CD4-positive, alpha-beta memory T cell (primary cell): ENCODE measurements at regions of chr1 and their contacts with region 1.

Region 1: DNA sequence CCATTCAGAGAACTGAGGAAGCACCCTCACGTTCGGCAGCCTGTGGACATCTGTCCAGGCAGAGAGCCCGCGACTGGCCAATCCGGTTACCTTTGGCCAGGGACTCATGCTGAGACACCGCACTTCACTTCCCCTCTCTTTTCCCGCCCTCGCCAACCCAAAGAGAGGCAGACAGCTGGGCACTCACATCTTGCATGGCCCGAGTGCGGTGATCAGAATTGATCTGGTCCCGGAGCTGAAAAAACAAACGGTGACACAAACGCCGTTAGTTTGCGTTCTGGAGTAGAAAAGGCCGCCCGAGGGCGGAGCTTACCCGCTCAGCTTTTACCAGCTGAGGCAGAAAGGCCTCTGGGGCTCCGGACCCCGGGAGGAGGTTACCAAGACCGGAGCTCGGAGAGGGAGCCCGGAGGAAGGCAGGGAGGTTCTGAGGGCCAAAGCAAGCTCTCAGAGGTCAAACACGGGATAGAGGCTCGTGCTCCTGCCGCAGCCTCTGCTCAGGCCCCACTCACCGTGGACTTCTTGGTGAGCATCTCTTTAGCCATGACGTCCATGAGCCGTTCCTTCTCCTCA is 376 bp downstream of the SF3A3 start:
- DNase-seq: peak in 2 of 5 donors; percentile 32 to 57
- H3K4me3 ChIP-seq: peak overlapping the region; percentile 91 to 93
- H3K4me3 Mint-ChIP-seq: peak overlapping the region; percentile 97 to 100 (median 99)
- H3K27ac ChIP-seq: peak overlapping the region; percentile 78
- H3K27ac Mint-ChIP-seq: peak overlapping the region; percentile 86 to 99 (median 95)
- H3K4me1 ChIP-seq: peaks cover 25% of the 10 kb centered on the region
- H3K4me1 Mint-ChIP-seq: peaks cover 10 to 36% (median 21%) of the 10 kb centered on the region in 4 donors
- H3K27me3 ChIP-seq: no peaks in the 10 kb centered on the region
- H3K27me3 Mint-ChIP-seq: peaks cover 0 to 2% of the 10 kb centered on the region in 2 donors

Region 2: GRCh38 chr1:37890378-37891014 is 99.0 kb before region 1 on chr1:
- CTCF ChIA-PET with region 1: no interaction called
- POLR2A ChIA-PET with region 1: no interaction called
- intact Hi-C with region 1: loop called (anchors 1 kb)
- DNase-seq: peak in 4 of 5 donors; percentile 30 to 39 (median 36)
- H3K4me3 ChIP-seq: no peak overlapping the region
- H3K4me3 Mint-ChIP-seq: no peak overlapping the region
- H3K27ac ChIP-seq: no peak overlapping the region
- H3K27ac Mint-ChIP-seq: peak overlapping the region in 6 of 7 donors; percentile 4 to 66 (median 42)
- H3K4me1 ChIP-seq: no peaks in the 10 kb centered on the region
- H3K4me1 Mint-ChIP-seq: peaks cover 2 to 5% (median 4%) of the 10 kb centered on the region in 4 donors
- H3K27me3 ChIP-seq: no peaks in the 10 kb centered on the region
- H3K27me3 Mint-ChIP-seq: no peaks in the 10 kb centered on the region

Region 3: DNA sequence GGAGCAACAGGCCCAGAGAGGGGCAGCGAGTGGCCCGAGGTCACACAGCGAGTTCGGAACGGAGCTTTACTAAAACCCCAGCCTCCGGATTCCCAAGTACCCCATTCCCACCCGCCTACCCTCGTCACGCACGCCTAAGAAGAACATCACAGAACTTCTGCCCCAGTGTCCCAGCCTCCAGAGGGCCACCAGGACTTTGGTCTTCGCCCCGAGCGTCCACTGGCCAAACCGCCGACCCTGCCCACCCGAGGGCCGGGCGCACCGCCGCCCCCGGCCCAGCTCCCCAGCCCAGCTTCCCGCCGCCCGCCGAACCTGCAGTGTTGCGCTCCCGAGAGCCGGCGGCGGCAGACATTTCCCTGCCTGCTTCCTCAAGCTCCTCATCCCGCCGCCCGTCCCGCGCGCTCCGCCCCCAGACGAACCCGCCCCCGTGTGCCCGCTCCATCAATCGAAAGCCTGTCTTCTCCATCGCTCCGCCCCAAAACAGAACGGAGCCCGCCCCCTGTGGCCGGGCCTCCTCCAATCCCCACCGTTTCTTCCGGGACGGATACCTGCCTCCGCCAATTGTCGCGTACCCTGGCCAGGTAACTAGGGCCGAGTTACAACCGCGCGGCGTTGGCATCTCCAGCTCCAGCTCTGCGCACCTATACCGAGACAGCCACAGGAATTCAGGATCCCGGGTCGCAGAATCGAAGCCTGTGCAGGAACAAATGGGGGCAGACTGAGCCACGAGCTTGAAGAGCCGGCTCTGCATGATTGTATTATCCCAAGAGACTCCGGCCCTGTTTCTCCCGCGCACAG is 57.9 kb before region 1 on chr1:
- CTCF ChIA-PET with region 1: interaction called, 3 read pairs
- POLR2A ChIA-PET with region 1: interaction called, 5 read pairs
- intact Hi-C with region 1: loop called (anchors 1 kb)
- DNase-seq: peak; percentile 95 to 97 (median 97)
- H3K4me3 ChIP-seq: peak overlapping the region; percentile 58 to 71
- H3K4me3 Mint-ChIP-seq: peak overlapping the region; percentile 93 to 99 (median 96)
- H3K27ac ChIP-seq: peak overlapping the region; percentile 70
- H3K27ac Mint-ChIP-seq: peak overlapping the region; percentile 69 to 95 (median 91)
- H3K4me1 ChIP-seq: peaks cover 34% of the 10 kb centered on the region
- H3K4me1 Mint-ChIP-seq: peaks cover 21 to 45% (median 32%) of the 10 kb centered on the region in 4 donors
- H3K27me3 ChIP-seq: no peaks in the 10 kb centered on the region
- H3K27me3 Mint-ChIP-seq: no peaks in the 10 kb centered on the region

Region 4: DNA sequence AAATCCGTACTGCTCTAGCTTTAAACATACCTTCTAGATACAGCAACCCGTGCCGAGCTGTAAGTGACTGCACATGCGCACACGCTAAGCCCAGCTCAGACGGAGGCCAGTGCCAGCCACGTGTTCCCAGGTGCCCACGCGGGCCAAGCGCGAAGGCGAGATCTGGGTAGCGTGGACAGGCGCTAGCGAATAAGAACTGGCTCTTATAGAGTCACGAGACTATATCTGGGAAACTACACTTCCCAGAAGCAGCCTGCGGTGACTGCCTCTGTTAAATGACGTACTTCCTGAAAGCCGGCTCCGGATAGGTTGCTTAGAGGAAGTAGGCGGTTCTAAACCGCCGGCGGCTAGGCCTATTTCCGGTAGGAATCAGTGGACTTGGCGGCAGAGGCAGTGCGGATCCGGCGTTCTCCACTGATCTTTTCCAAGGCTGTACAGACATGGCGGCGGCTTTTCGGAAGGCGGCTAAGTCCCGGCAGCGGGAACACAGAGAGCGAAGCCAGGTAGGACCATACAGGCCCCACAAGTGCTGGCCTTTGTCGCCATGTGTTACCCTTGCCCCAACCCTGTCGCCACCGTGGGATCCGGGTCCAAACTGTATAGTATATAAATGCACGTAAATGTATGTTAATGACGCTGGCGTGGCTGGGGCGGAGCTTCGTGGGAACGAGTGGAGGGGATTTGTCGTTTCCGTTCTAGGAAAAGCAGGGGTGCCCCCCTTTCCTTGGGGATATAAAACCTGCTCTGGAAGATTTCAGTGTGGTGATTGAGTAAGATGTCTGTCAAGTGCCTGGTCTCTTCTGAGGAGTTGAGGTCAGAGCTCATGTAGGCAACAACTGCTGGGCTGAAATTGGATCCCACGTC is 23.1 kb after region 1 on chr1 and contains the start of gene UTP11:
- CTCF ChIA-PET with region 1: interaction called, 192 read pairs
- POLR2A ChIA-PET with region 1: interaction called, 18 read pairs
- intact Hi-C with region 1: loop called (anchors 1 kb)
- DNase-seq: peak; percentile 91 to 96 (median 93)
- H3K4me3 ChIP-seq: peak within 1 kb of the TSS; percentile 72 to 94
- H3K4me3 Mint-ChIP-seq: peak within 1 kb of the TSS; percentile 91 to 100 (median 98)
- H3K27ac ChIP-seq: peak within 1 kb of the TSS; percentile 87
- H3K27ac Mint-ChIP-seq: peak within 1 kb of the TSS; percentile 92 to 100 (median 99)
- H3K4me1 ChIP-seq: peaks cover 29% of the 10 kb centered on the region
- H3K4me1 Mint-ChIP-seq: peaks cover 19 to 46% (median 34%) of the 10 kb centered on the region in 4 donors
- H3K27me3 ChIP-seq: no peaks in the 10 kb centered on the region
- H3K27me3 Mint-ChIP-seq: no peaks in the 10 kb centered on the region
- total RNA-seq, gene UTP11: 17.3 to 17.5 TPM

Region 5: DNA sequence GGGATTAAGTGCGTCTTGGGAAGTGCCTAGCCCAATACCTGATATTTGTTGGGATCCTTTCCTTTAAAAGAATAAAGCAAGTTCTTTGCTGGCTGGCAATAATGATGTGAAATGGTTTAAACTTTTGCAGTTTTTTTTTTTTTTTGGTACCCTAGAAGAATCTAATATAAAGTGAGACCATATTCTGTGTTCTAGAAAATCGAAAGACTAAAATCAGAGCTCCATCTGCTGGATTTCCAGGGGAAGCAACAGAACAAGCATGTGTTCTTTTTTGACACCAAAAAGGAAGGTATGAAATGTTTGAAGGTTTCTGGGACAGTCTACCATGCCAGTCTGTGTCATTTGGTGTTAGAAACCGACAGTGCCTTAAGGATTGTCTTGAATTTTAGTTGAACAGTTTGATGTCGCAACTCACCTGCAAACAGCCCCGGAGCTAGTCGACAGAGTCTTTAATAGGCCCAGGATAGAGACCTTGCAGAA is 29.5 kb after region 1 on chr1:
- CTCF ChIA-PET with region 1: interaction called, 192 read pairs
- POLR2A ChIA-PET with region 1: interaction called, 4 read pairs
- intact Hi-C with region 1: loop called (anchors 1 kb)
- DNase-seq: peak in 1 of 5 donors; percentile 33
- H3K4me3 ChIP-seq: no peak overlapping the region
- H3K4me3 Mint-ChIP-seq: no peak overlapping the region
- H3K27ac ChIP-seq: no peak overlapping the region
- H3K27ac Mint-ChIP-seq: no peak overlapping the region
- H3K4me1 ChIP-seq: peaks cover 9% of the 10 kb centered on the region
- H3K4me1 Mint-ChIP-seq: peaks cover 6 to 11% (median 10%) of the 10 kb centered on the region in 4 donors
- H3K27me3 ChIP-seq: no peaks in the 10 kb centered on the region
- H3K27me3 Mint-ChIP-seq: no peaks in the 10 kb centered on the region

Region 6: GRCh38 chr1:38026592-38027200 is 37.2 kb after region 1 on chr1:
- CTCF ChIA-PET with region 1: interaction called, 192 read pairs
- POLR2A ChIA-PET with region 1: no interaction called
- intact Hi-C with region 1: no loop called
- DNase-seq: peak in 1 of 5 donors; percentile 46
- H3K4me3 ChIP-seq: no peak overlapping the region
- H3K4me3 Mint-ChIP-seq: no peak overlapping the region
- H3K27ac ChIP-seq: no peak overlapping the region
- H3K27ac Mint-ChIP-seq: peak overlapping the region in 4 of 7 donors; percentile 34 to 87 (median 61)
- H3K4me1 ChIP-seq: peaks cover 43% of the 10 kb centered on the region
- H3K4me1 Mint-ChIP-seq: peaks cover 16 to 47% (median 29%) of the 10 kb centered on the region in 4 donors
- H3K27me3 ChIP-seq: no peaks in the 10 kb centered on the region
- H3K27me3 Mint-ChIP-seq: no peaks in the 10 kb centered on the region